PC-9 (cell line): ENCODE measurements at regions of chr9 and their contacts with region 1.

Region 1: DNA sequence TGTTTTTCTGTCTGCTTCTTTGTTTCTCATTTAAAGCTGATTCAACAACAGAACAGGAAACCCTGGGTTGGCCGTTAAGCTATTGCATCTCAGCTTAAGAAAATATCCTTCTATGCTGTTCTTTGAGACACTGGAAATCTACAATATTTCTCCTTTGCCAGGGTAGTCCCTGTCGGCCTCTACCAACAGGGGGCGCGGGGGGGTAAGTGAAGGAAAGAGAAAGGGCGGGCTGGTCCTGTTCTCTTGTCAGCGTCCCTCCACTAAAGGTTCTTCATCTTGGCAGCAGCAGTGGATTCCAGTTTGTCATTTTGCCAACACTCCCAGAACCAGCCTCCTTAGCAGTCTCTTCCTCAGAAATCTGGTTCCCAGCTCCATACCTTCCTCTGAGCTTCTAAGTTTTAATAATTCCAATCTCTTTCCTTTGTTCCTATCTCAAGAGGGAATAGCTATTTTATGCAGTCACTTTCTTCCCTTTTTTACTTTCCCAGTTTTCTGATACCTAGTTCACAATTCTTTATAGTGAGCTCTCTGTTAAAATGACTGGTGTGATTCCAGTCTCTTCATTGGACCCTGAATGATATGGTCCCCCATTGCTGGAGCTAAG is 222.3 kb downstream of the GLIS3 start:
- DNase-seq: peak in 1 of 2 experiments; percentile 70
- H3K4me3 ChIP-seq: no peak overlapping the region
- H3K27ac ChIP-seq: no peak overlapping the region
- H3K4me1 ChIP-seq: no peaks in the 10 kb centered on the region
- H3K27me3 ChIP-seq: no peaks in the 10 kb centered on the region
- CTCF ChIP-seq: peak; percentile 73

Region 2: GRCh38 chr9:3809724-3810123 is 267.9 kb before region 1 on chr9:
- CTCF ChIA-PET with region 1: no interaction called
- POLR2A ChIA-PET with region 1: no interaction called
- intact Hi-C with region 1: no loop called
- DNase-seq: no peak
- H3K4me3 ChIP-seq: no peak overlapping the region
- H3K27ac ChIP-seq: no peak overlapping the region
- H3K4me1 ChIP-seq: no peaks in the 10 kb centered on the region
- H3K27me3 ChIP-seq: no peaks in the 10 kb centered on the region
- CTCF ChIP-seq: no peak

Region 3: DNA sequence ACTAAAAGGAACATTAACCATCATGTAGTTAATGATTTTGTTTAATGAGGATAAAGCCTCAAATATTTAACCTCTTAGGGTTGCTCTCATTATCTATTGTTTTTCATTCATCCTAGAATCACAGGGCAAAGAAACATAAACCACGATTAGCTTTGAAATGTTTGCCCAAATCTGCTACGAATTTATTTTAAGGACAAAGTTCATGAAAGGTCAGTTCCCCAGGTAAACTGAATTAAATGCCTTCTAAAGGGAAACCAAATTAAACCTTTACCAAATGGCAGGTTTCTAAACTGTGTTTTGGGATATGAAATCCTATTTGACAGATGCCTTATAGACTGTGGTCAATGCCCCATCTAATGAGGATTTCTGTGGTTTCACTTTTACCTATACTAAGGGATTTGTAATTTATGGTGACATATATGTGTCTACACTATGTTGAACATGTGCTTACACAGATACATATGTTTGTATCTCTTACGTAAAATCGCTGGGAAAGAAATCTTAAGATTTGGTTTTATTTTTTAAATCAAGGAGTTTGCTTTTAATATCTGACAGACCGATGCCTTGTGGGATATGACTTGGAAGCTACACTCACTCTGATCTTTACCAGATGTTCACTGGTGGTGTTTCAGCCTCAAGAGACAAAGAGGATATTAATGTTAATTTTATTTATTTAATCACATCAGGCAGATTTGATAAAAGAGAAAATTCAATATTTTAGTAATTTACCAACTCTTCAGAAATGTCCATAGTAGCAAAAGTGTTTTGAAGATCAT is 33.8 kb after region 1 on chr9:
- CTCF ChIA-PET with region 1: no interaction called
- POLR2A ChIA-PET with region 1: no interaction called
- intact Hi-C with region 1: no loop called
- DNase-seq: no peak
- H3K4me3 ChIP-seq: no peak overlapping the region
- H3K27ac ChIP-seq: no peak overlapping the region
- H3K4me1 ChIP-seq: no peaks in the 10 kb centered on the region
- H3K27me3 ChIP-seq: no peaks in the 10 kb centered on the region
- CTCF ChIP-seq: no peak

Region 4: DNA sequence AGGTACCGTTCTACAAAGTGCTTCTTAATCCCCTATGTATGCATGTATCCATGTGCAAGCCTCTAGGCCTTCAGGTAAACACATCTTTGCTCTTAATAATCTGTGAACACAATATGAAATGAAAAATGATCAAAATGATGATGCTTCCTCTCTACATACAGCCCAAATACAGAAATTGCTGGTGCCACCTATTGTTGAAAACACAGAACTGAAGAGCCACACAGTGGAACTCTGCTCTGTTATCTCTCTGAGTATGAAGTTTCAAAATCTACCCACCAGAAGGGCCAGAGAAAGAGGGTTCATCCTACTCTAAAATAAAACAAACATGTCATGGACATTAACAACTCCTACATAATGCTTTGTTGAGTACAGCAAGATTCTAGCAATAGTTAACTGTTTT is 151.0 kb after region 1 on chr9:
- CTCF ChIA-PET with region 1: no interaction called
- POLR2A ChIA-PET with region 1: interaction called, 4 read pairs
- intact Hi-C with region 1: loop called (anchors 1 kb)
- DNase-seq: no peak
- H3K4me3 ChIP-seq: no peak overlapping the region
- H3K27ac ChIP-seq: no peak overlapping the region
- H3K4me1 ChIP-seq: peaks cover 13% of the 10 kb centered on the region; the same call in 1 of the 2 replicates
- H3K27me3 ChIP-seq: no peaks in the 10 kb centered on the region
- CTCF ChIP-seq: peak; percentile 55